Ovary (tissue), 10 donors: ENCODE measurements at regions of chr12 and their contacts with region 1.

Region 1: DNA sequence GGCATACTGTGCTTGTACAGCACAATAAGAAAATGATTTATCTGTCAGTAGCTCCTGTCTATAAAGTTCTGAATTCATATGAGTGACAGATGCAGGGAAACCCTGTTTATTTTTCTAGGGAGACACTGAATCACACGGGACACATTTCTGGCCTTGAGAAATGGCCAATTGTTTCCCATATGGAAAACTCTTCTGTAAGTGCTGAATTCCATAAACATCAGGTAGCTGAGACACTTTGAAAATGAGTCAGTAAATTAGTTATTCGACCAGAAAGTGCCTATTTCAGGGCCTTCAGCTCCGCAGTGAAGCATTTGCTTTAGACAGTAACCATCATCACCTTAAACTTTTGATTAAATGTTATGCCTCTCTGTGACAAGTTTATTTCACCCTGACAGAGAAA is 184.4 kb downstream of the TMEM132D start:
- DNase-seq: no peak
- H3K4me3 ChIP-seq: no peak overlapping the region
- H3K27ac ChIP-seq: no peak overlapping the region
- H3K4me1 ChIP-seq: no peaks in the 10 kb centered on the region
- H3K27me3 ChIP-seq: no peaks in the 10 kb centered on the region
- CTCF ChIP-seq: no peak
- EP300 ChIP-seq: no peak
- POLR2A ChIP-seq: no peak

Region 2: GRCh38 chr12:129659927-129660326 is 59.5 kb before region 1 on chr12:
- intact Hi-C with region 1: loop called in 1 of 4 experiments (anchors 5 kb)
- DNase-seq: no peak
- H3K4me3 ChIP-seq: no peak overlapping the region
- H3K27ac ChIP-seq: no peak overlapping the region
- H3K4me1 ChIP-seq: no peaks in the 10 kb centered on the region
- H3K27me3 ChIP-seq: no peaks in the 10 kb centered on the region
- CTCF ChIP-seq: no peak
- EP300 ChIP-seq: no peak
- POLR2A ChIP-seq: no peak